ENCODE measurements at regions of chr15 and their contacts with region 1.

Region 1: GRCh38 chr15:64989416-64990167 is at the start of gene SPG21:
- DNase-seq: peak; percentile 91
- ATAC-seq: peak; percentile 93
- H3K4me3 ChIP-seq: peak within 1 kb of the TSS; percentile 89
- H3K27ac ChIP-seq: peak within 1 kb of the TSS; percentile 90
- H3K4me1 ChIP-seq: peaks cover 5% of the 10 kb centered on the region
- H3K27me3 ChIP-seq: no peaks in the 10 kb centered on the region
- CTCF ChIP-seq: no peak
- POLR2A ChIP-seq: peak; percentile 90
- RAD21 ChIP-seq: peak; percentile 5; the same call in 1 of the 2 replicates
- total RNA-seq, gene SPG21: 60.8 and 65.3 TPM in 2 replicates

Region 2: GRCh38 chr15:64841258-64842095 is 148.1 kb before region 1 on chr15 and contains the start of gene PLEKHO2:
- CTCF ChIA-PET with region 1: no interaction called
- POLR2A ChIA-PET with region 1: no interaction called
- dilution Hi-C with region 1: no loop called
- in situ Hi-C with region 1: no loop called
- intact Hi-C with region 1: loop called (anchors 5 kb)
- DNase-seq: peak; percentile 92
- ATAC-seq: peak; percentile 88
- H3K4me3 ChIP-seq: peak within 1 kb of the TSS; percentile 83
- H3K27ac ChIP-seq: peak within 1 kb of the TSS; percentile 92
- H3K4me1 ChIP-seq: peaks cover 17% of the 10 kb centered on the region
- H3K27me3 ChIP-seq: no peaks in the 10 kb centered on the region
- CTCF ChIP-seq: peak; percentile 35; the same call in 1 of the 2 replicates
- POLR2A ChIP-seq: peak; percentile 94
- RAD21 ChIP-seq: no peak; the same call in 1 of the 2 replicates
- total RNA-seq, gene PLEKHO2: 18.6 and 19.0 TPM in 2 replicates

Region 3: GRCh38 chr15:64856429-64857145 is 133.0 kb before region 1 on chr15:
- CTCF ChIA-PET with region 1: no interaction called
- POLR2A ChIA-PET with region 1: no interaction called
- dilution Hi-C with region 1: no loop called
- in situ Hi-C with region 1: no loop called
- intact Hi-C with region 1: loop called (anchors 5 kb)
- DNase-seq: peak; percentile 80
- ATAC-seq: peak; percentile 69
- H3K4me3 ChIP-seq: no peak overlapping the region
- H3K27ac ChIP-seq: peak overlapping the region; percentile 96
- H3K4me1 ChIP-seq: peaks cover 65% of the 10 kb centered on the region
- H3K27me3 ChIP-seq: no peaks in the 10 kb centered on the region
- CTCF ChIP-seq: peak; percentile 24; the same call in 1 of the 2 replicates
- POLR2A ChIP-seq: no peak
- RAD21 ChIP-seq: peak; percentile 23; the same call in 1 of the 2 replicates

Region 4: DNA sequence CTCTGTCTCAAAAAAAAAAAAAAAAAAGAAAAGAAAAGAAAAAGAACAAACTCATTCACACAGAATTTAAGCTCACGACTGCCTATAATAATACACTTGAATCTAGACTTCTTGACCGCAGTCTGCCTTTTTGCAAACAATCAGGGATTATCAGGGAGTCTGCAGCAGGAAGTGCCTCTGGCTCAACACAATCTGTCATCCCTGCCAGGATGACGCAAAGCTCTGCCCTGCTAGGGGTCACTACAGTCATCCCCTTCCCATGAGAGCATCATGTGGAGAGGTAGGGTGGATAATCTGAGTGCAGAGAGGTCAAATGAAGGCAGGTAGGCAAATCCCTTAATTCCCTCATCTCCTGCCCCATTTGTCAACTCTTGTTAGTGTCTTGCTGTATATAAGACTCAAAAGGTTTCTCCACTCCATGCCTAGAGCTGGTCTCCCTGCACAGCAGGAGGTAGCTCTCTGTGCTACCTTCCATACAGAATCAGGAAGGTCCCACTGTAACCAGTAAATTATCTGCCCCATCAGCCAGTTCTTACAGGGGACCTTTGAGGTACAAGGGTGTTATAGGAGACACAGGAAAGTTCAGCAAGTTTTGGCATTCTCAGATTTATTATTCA is 121.2 kb after region 1 on chr15:
- CTCF ChIA-PET with region 1: no interaction called
- POLR2A ChIA-PET with region 1: no interaction called
- dilution Hi-C with region 1: no loop called
- in situ Hi-C with region 1: no loop called
- intact Hi-C with region 1: no loop called
- DNase-seq: peak; percentile 92
- ATAC-seq: peak; percentile 91
- H3K4me3 ChIP-seq: no peak overlapping the region
- H3K27ac ChIP-seq: no peak overlapping the region
- H3K4me1 ChIP-seq: no peaks in the 10 kb centered on the region
- H3K27me3 ChIP-seq: no peaks in the 10 kb centered on the region
- CTCF ChIP-seq: no peak
- POLR2A ChIP-seq: no peak
- RAD21 ChIP-seq: no peak